Activated CD8-positive, alpha-beta T cell treated with anti-CD3 and anti-CD28 coated beads for 36 hours (primary cell): ENCODE measurements at regions of chr22 and their contacts with region 1.

Region 1: DNA sequence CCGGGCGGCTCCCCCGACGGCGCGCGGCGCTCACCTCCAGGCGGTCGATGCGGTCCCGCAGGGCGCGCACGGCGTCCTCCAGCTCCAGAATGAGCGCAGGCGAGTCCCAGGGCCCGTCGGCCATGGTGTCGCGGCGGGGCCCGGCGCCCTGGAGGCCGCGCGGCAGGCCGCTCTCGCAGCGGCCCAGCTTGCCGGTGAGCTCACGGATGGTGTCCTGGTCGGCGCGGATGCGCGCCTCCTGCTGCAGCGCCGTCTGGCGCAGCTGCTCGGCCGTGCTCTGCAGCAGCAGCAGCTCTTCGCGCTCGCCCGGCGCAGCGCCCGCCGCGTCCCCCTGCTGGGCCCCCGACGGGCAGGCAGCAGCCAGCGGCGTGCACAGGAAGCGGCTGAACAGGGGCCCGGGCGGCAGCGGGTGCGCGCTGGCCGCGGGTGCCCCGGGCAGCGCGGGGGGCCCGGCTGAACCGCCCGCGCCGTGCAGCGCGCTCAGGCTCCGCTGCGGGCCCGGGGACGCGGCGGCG is 570 bp downstream of the NPTXR start:
- DNase-seq: peak; percentile 63
- ATAC-seq: peak; percentile 86
- H3K4me3 Mint-ChIP-seq: peak overlapping the region; percentile 18
- H3K27ac Mint-ChIP-seq: no peak overlapping the region
- H3K4me1 Mint-ChIP-seq: peaks cover 10% of the 10 kb centered on the region
- H3K27me3 Mint-ChIP-seq: peaks cover 21% of the 10 kb centered on the region
- CTCF ChIP-seq: peak; percentile 38

Region 2: DNA sequence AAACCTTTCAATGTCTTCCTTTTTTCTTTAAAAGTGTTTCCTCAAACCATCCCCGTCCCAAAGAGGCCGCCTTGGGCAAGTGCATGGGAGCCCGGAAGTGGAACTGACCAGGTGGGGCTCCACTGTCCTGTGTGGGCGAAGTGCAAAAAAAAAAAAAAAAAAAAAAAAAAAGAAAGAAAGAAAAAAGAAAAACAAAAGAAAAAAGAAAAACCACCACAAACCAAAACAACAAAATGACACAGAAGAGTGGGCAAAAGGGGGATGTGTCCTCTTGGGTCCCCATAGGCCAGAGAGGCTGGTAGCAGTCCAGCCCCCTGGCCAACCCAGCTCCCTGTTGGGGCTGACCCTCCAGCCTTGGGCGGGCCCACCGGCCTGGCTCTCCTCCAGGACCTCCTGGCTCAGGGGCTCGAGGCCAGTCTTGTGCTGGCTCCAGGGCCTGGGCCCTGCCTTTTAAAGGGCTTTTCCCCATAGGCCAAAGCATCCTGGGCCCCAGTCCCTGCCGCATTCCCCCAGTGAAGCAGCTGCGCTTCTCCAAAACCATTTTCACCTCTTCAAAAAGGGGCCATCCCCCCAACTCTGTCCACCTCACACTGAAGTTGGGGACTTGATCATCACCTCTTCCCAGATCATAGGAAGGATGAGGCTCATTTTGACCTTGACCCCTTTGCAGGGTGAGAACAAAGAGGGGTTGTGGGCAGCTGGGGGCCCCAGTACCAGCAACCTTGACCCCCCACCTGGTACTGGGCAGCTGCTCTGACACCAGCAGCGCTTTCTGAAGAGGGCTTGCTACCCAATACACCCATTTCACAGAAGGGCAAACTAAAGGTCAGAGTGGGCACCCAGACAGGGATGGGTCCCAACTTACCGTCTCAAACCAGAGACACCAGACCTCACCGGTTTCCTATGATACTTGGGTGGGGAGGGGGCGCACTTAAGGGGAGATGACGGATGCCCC is 19.4 kb after region 1 on chr22:
- CTCF ChIA-PET with region 1: interaction called, 4 read pairs
- POLR2A ChIA-PET with region 1: interaction called, 10 read pairs
- intact Hi-C with region 1: no loop called
- DNase-seq: no peak
- ATAC-seq: no peak
- H3K4me3 Mint-ChIP-seq: no peak overlapping the region
- H3K27ac Mint-ChIP-seq: no peak overlapping the region
- H3K4me1 Mint-ChIP-seq: peaks cover 5% of the 10 kb centered on the region
- H3K27me3 Mint-ChIP-seq: no peaks in the 10 kb centered on the region
- CTCF ChIP-seq: no peak